Right lobe of liver (tissue), 6 donors: ENCODE measurements at regions of chr11 and their contacts with region 1.

Region 1: DNA sequence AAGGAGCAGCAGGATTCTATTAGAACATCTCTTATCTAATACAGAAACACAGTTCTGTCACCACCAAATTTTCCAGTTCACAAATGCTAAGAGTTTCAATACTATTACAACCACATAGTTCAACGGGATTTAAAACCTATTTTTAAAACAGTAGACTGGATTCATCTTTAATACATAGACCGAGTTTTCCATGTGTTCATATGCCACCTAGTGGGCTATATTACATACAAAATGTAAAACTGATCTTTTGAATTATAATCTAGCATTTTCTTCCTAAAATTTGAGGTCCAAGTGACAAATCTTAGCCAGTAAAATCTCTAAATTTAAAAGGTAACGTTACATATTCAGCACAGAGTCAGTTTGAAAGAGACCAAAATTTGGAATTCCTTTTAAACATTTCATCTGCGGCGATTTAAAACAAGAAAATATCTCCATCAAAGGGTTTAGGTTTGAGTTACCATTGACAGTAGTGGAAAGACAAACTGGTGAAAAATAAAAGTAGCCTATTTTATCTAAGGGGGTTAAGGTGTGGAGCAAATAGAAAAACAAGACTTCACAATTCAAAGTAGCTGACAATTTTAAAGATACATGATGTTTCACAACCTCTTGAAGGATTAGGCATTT is 269.3 kb upstream of the MPPED2 start:
- DNase-seq: no peak
- ATAC-seq: peak; percentile 54 to 61 (median 60)
- H3K4me3 ChIP-seq: no peak overlapping the region
- H3K27ac ChIP-seq: no peak overlapping the region
- H3K4me1 ChIP-seq: no peaks in the 10 kb centered on the region
- H3K27me3 ChIP-seq: no peaks in the 10 kb centered on the region
- CTCF ChIP-seq: peak; percentile 47 to 57 (median 52)
- POLR2A ChIP-seq: no peak

Region 2: DNA sequence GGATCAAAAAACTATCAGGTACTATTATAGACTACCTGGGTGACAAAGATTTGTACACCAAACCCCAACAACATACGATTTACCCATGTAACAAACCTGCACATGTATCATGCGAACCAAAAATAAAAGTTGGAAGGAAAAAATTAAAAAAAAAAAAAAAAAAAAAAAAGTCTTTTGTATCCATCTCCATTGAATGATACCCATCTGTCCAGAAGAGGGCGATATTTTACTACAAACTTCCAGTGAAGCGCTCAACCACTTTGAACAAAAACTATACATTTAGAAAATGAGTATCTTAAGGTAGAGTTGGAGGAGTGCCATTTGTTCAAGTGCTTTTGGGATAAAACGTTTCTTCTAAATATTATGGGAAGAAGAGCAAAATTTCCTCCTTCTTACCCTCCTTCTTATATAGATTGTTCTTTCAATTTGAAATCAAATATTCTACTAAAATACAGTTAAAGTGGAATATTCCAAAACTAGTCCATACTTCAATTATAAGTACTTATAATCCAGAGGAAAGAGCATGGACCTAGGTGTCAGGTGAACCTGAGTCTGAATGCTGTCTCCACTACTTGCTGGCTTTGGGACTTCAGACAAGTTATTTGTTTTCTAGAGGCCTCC is 509.3 kb before region 1 on chr11:
- intact Hi-C with region 1: loop called in 1 of 2 experiments (anchors 5 kb)
- DNase-seq: no peak
- ATAC-seq: peak; percentile 59 to 73 (median 69)
- H3K4me3 ChIP-seq: no peak overlapping the region
- H3K27ac ChIP-seq: no peak overlapping the region
- H3K4me1 ChIP-seq: no peaks in the 10 kb centered on the region
- H3K27me3 ChIP-seq: no peaks in the 10 kb centered on the region
- CTCF ChIP-seq: peak; percentile 37 to 66 (median 64)
- POLR2A ChIP-seq: no peak

Region 3: DNA sequence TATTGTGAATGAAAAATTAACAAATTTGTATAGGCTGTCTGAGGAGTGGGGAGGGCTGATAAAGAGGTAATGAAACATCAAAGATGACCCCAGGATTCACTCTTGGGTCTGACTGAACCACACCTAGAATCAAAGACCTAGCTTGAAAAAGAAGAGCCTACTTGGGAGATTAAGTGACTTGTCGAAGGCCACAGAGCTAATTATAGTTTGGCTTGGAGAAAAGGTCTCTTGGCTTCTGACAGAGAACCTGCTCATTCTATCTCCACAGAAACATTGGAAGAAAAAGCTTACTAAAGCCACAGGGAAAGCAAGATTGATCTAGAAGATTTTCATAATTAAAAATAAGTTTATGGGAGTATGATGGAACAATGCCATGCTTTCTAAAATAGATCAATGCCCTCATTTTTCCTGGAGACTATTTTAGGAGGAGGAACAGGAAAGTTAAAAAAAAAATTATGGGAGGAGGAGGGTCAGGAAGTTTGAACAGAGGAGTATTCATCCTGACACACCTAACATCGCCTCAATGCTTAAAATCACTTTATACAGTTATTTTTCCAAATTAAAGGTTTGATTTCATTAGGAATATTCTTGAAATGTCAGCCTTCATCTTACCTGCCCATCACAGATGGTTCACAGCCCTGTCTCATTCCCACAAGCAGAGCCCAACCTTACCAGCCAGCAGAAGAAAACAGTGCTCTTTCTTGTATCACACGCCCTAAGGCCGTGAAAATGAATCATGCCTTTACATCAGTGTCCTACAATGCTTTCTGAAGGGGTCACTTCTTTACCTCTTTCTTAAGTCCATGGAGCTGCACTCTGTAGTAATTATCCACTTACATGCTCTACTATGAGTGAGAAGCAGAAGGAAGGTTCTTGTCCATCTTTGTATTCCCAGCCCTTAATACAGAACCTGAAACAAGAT is 38.3 kb before region 1 on chr11:
- intact Hi-C with region 1: no loop called
- DNase-seq: no peak
- ATAC-seq: no peak
- H3K4me3 ChIP-seq: no peak overlapping the region
- H3K27ac ChIP-seq: no peak overlapping the region
- H3K4me1 ChIP-seq: no peaks in the 10 kb centered on the region
- H3K27me3 ChIP-seq: no peaks in the 10 kb centered on the region
- CTCF ChIP-seq: no peak
- POLR2A ChIP-seq: no peak